Activated T-helper 1 cell treated with anti-CD3 and anti-CD28 coated beads, Interleukin-12 subunit alpha, Interleukin-12 subunit beta, Interleukin-2, Interleukin-4 antibody, amounts not matched to agents 30 ng/mL and 10 ng/mL and 1 ng/mL, durations not matched to agents 14 hours and 24 hours and 36 hours (primary cell): ENCODE measurements at regions of chr12 and their contacts with region 1.

Region 1: GRCh38 chr12:92208613-92209121 is 63.0 kb upstream of the BTG1 start:
- DNase-seq: peak; percentile 26
- H3K4me3 Mint-ChIP-seq: peak overlapping the region; percentile 72
- H3K27ac Mint-ChIP-seq: peak overlapping the region; percentile 94
- H3K4me1 Mint-ChIP-seq: peaks cover 46% of the 10 kb centered on the region
- H3K27me3 Mint-ChIP-seq: no peaks in the 10 kb centered on the region

Region 2: DNA sequence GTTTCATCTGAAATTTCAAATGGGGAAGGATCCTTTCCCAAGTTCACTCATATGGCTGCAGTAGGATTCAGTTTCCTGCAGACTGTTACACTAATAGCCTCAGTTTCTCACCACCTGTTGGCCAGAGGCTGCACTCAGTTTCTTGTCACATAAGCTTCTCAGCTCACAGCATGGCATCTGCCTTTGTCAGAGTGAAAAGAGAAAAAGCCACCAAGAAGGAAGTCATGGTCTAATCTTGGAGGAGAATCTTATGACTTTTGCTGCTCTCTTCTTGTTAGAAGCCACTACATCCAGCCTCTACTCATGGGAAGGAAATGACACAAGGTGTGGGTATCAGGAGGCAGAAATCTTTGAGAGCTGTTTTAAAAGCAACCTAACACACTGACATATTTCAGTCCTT is 23.6 kb before region 1 on chr12:
- intact Hi-C with region 1: loop called (anchors 1 kb)
- DNase-seq: peak; percentile 46
- H3K4me3 Mint-ChIP-seq: peak overlapping the region; percentile 19
- H3K27ac Mint-ChIP-seq: peak overlapping the region; percentile 70
- H3K4me1 Mint-ChIP-seq: peaks cover 63% of the 10 kb centered on the region
- H3K27me3 Mint-ChIP-seq: no peaks in the 10 kb centered on the region

Region 3: DNA sequence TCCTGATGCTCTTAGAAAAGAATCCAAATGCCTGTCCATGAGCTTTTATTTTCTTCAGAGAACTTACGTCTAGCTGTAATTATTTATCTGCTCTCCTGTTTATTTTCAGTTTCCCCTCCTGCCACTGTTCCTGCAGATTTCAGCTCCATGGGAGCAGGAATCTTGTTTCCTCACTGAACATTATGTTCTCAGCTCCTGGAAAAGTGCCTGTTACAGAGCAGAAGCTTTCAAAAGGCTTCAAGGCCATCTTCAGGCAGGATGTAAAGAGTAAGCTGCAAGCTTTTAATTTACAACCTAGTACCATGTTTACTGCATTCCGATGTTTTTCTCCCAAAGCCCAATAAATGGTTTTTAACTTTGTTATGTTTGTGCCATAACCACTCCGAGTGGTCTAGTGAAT is 35.4 kb after region 1 on chr12:
- intact Hi-C with region 1: no loop called
- DNase-seq: no peak
- H3K4me3 Mint-ChIP-seq: no peak overlapping the region
- H3K27ac Mint-ChIP-seq: no peak overlapping the region
- H3K4me1 Mint-ChIP-seq: peaks cover 8% of the 10 kb centered on the region
- H3K27me3 Mint-ChIP-seq: no peaks in the 10 kb centered on the region

Region 4: GRCh38 chr12:92363295-92364146 is 154.9 kb after region 1 on chr12:
- intact Hi-C with region 1: loop called (anchors 2 kb)
- DNase-seq: no peak
- H3K4me3 Mint-ChIP-seq: peak overlapping the region; percentile 64
- H3K27ac Mint-ChIP-seq: peak overlapping the region; percentile 77
- H3K4me1 Mint-ChIP-seq: peaks cover 59% of the 10 kb centered on the region
- H3K27me3 Mint-ChIP-seq: no peaks in the 10 kb centered on the region

Region 5: DNA sequence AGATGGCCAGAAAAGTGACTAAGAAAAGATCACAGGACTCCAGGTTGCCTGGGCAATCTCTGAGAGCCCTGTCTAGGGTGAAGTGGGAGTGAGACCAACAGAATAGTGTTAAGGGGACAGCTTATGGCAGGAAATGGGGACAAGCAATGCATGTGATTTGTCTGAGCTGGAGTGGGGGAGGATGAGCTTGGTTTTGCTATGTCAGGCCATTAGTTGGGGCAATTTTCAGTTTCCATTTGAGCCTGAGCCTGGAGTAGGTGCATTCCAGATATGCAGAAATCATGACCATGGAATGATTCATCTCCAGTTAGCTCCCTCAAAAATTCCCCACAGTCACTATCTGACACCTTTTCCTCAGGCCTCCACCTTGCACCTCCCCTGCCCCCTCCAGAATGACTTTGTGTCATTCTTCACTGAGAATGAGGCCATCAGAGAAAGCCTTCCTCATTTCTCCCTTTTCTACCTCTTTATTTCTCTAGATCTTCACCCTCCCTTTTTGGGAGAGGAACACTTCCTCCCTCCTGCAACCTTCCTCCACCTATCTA is 343.3 kb after region 1 on chr12:
- intact Hi-C with region 1: loop called (anchors 5 kb)
- DNase-seq: no peak
- H3K4me3 Mint-ChIP-seq: no peak overlapping the region
- H3K27ac Mint-ChIP-seq: no peak overlapping the region
- H3K4me1 Mint-ChIP-seq: peaks cover 31% of the 10 kb centered on the region
- H3K27me3 Mint-ChIP-seq: no peaks in the 10 kb centered on the region